MCF 10A (cell line): ENCODE measurements at regions of chr15 and their contacts with region 1.

Region 1: DNA sequence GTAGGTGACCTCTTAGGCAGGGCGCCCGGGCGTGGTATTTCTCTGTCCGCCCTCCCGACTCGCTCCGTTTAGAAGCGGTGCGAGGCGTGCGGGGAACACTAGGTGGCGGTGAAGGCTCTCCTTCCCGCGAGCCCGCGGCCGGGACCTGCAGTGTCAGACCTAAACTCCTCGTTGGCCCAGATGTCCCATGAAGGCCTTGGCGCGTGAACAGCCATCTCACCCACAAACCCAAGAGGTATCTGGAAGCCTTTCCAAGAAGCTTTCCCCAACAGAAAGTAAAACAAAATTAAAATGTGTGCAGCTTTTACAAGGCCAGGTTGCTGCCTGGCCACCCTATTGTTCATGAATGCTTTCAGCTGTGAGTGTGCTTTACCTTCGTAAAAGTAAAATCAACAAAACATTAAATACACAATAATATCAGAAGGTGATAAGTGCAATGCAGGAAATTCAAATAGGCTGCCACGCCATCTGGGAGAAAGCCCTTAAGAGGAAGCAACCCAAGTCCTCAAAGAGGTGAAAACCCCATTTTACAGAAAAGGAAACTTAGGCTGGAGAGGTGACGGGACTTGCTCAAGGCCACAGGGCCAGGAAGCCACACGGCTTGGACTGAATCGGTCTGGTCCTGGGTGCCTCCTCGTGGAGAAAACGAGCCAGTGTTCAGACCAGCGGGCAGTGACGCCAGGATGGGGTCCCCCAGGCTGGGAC is 120.3 kb downstream of the ETFA start:
- DNase-seq: peak; percentile 77
- H3K4me3 Mint-ChIP-seq: peak overlapping the region; percentile 43
- H3K27ac Mint-ChIP-seq: no peak overlapping the region
- H3K4me1 Mint-ChIP-seq: peaks cover 33% of the 10 kb centered on the region
- H3K27me3 Mint-ChIP-seq: no peaks in the 10 kb centered on the region
- CTCF ChIP-seq: peak; percentile 83

Region 2: GRCh38 chr15:76065267-76065666 is 125.7 kb before region 1 on chr15:
- CTCF ChIA-PET with region 1: no interaction called
- POLR2A ChIA-PET with region 1: no interaction called
- intact Hi-C with region 1: no loop called
- DNase-seq: no peak
- H3K4me3 Mint-ChIP-seq: no peak overlapping the region
- H3K27ac Mint-ChIP-seq: no peak overlapping the region
- H3K4me1 Mint-ChIP-seq: peaks cover 5% of the 10 kb centered on the region
- H3K27me3 Mint-ChIP-seq: peaks cover 39% of the 10 kb centered on the region
- CTCF ChIP-seq: no peak

Region 3: DNA sequence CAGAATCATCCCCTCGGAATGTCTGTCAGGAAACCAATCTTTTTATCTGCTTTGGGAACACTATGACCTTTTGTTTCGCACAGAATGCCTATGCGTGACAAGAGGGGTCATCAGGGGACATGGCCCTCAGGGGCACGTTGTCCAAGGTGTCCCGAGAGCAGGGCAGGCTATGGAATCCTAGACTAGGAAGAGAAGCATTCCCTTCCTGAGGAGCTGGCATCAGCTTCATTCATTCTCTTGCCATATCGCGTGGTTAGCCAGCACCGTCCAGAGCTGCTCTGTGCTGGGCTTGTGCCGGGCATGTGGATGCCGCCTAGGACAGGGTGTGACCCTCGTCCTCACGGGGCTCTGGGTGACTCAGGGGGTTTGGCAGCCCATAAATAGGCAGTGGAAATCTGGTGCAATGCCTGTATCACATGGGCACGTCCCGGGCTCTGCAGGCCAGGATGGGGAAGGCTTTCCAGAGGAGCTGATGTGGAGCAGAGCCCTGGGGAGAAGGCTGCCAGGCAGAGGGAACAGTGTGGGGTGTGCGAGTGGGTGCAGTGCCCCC is 13.4 kb before region 1 on chr15:
- CTCF ChIA-PET with region 1: interaction called, 16 read pairs
- POLR2A ChIA-PET with region 1: interaction called, 6 read pairs
- intact Hi-C with region 1: no loop called
- DNase-seq: peak; percentile 92
- H3K4me3 Mint-ChIP-seq: peak overlapping the region; percentile 44
- H3K27ac Mint-ChIP-seq: peak overlapping the region; percentile 91
- H3K4me1 Mint-ChIP-seq: peaks cover 18% of the 10 kb centered on the region
- H3K27me3 Mint-ChIP-seq: no peaks in the 10 kb centered on the region
- CTCF ChIP-seq: no peak

Region 4: GRCh38 chr15:76285239-76285825 is 94.3 kb after region 1 on chr15:
- CTCF ChIA-PET with region 1: interaction called, 6 read pairs
- POLR2A ChIA-PET with region 1: interaction called, 5 read pairs
- intact Hi-C with region 1: loop called (anchors 1 kb)
- DNase-seq: peak; percentile 44
- H3K4me3 Mint-ChIP-seq: no peak overlapping the region
- H3K27ac Mint-ChIP-seq: no peak overlapping the region
- H3K4me1 Mint-ChIP-seq: no peaks in the 10 kb centered on the region
- H3K27me3 Mint-ChIP-seq: no peaks in the 10 kb centered on the region
- CTCF ChIP-seq: peak; percentile 43

Region 5: DNA sequence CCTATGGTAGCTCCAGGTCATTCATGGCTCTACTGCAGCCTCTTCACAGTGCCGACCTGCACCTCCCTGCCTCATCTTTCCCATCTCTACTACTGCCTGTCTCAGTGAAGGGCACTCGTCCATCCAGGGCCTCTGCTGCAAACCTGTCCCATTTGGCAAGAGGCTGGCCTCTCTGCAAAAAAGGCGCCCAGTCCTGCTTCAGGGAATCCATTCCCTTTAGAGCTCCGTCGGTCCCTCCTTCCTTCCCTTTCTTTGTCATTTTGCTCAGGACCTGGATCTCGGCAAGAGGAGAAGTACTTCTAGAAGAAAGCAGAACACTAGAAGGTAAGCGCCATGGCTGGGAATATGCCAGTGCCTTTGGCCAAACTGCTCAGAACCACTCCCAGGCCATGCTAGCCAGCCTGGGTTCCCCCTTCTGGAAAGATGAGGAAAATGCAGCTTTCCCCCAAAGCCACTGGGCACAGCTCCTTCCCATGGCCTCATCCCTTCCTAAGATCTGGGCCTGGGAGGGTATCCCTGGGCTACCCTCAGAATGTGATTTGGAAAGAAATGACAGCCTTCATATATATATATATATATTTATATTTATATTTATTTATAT is 139.2 kb after region 1 on chr15:
- CTCF ChIA-PET with region 1: interaction called, 3 read pairs
- POLR2A ChIA-PET with region 1: no interaction called
- intact Hi-C with region 1: loop called (anchors 2 kb)
- DNase-seq: peak; percentile 72
- H3K4me3 Mint-ChIP-seq: no peak overlapping the region
- H3K27ac Mint-ChIP-seq: no peak overlapping the region
- H3K4me1 Mint-ChIP-seq: no peaks in the 10 kb centered on the region
- H3K27me3 Mint-ChIP-seq: no peaks in the 10 kb centered on the region
- CTCF ChIP-seq: peak; percentile 44

Region 6: DNA sequence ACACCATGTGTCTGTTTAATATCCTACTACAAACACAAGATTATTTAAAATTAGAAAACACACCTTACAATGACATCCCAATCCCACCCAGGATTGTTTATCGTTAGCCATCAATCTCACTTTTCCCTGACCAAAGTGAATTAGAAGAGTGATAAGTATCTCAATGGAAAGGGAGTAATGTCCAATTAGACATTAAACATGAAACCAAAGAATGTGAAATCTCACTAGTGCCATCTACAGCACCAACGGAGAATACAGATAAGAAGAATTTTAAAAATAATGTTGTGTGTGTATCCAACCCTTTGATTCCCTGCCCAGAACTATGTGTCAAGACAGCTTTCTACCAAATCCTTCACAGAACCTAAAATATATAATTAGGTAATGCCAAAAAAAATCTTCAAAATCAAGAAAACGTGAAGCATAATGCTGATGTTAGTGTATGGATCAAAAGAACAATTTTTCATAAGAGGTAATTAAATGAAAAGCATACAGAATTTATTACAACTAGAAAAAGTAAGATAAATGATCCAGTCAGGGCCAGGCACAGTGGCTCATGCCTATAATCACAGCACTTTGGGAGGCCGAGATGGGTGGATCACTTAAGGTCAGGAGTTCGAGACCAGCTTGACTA is 650.0 kb after region 1 on chr15:
- CTCF ChIA-PET with region 1: interaction called, 5 read pairs
- POLR2A ChIA-PET with region 1: no interaction called
- intact Hi-C with region 1: loop called (anchors 1 kb)
- DNase-seq: peak; percentile 48
- H3K4me3 Mint-ChIP-seq: no peak overlapping the region
- H3K27ac Mint-ChIP-seq: no peak overlapping the region
- H3K4me1 Mint-ChIP-seq: peaks cover 18% of the 10 kb centered on the region
- H3K27me3 Mint-ChIP-seq: no peaks in the 10 kb centered on the region
- CTCF ChIP-seq: peak; percentile 57

Region 7: GRCh38 chr15:76866716-76867321 is 675.8 kb after region 1 on chr15:
- CTCF ChIA-PET with region 1: interaction called, 11 read pairs
- POLR2A ChIA-PET with region 1: no interaction called
- intact Hi-C with region 1: loop called (anchors 2 kb)
- DNase-seq: peak; percentile 27
- H3K4me3 Mint-ChIP-seq: no peak overlapping the region
- H3K27ac Mint-ChIP-seq: no peak overlapping the region
- H3K4me1 Mint-ChIP-seq: no peaks in the 10 kb centered on the region
- H3K27me3 Mint-ChIP-seq: no peaks in the 10 kb centered on the region
- CTCF ChIP-seq: peak; percentile 37